Aorta (tissue), 5 donors: ENCODE measurements at regions of chr5 and their contacts with region 1.

Region 1: DNA sequence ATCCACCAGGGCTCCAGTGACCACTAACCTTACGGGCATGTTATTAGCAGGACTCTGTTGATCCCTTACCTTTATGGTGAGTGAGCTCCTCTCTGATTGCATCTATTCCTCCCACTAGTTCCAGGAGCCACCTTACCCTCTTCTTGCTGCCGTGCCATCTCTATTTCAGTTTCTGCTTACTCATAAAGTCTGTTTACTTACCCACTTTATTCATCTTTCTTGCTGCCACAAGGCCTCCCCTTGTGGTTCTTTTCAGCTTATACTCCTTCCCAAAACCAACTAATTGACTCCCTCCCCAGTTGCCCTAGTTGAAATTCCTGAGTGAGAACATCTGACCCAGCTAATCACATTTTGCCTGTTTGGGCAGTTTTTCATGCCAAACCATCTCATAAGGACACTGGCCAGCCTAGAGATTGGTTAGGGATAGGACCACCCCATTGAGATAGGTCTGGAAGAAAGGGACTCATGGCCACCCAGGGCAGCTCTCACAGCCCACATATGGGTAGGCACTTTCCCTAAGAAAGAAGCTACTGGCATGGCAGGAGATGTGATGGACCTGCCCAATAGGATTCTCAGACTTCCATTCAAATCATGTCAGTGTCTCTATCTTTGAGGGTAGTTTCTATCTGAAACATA is 412.7 kb downstream of the EFNA5 start:
- DNase-seq: no peak
- ATAC-seq: no peak
- H3K4me3 ChIP-seq: no peak overlapping the region
- H3K27ac ChIP-seq: no peak overlapping the region
- H3K4me1 ChIP-seq: peaks cover 0 to 7% of the 10 kb centered on the region in 2 donors
- H3K27me3 ChIP-seq: no peaks in the 10 kb centered on the region

Region 2: DNA sequence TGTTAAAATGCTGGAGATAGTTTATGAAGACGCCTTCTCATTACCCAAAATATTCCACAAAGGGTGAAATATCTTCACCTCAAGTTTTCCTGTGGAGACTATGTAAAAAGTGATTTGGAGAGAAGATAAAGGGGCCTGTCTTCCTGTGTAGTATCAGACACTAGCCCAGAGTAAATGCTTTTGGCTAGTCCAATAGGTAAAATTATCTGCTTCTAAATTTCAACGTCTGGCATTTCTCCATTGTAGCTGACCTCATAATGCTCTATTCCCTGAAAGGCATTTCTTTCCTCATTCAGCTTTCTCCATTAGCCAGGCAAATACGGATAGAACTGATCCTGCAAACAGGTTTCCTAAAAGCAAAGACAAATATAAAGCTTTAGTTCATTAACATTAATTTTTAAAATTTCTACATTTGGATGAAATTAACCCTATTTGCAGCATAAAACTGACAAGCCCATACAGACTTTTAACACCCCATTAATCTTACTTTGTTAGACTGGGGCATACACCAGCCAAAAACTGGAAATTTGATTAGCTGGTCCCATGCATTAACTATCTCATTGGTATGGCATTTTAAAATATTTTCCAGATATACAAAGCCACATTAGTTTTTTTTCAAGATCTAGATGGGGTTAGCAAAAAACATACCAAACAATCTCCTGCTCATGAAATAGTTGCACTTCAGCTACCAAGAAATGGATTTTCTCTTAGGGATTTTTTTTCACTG is 136.0 kb before region 1 on chr5:
- intact Hi-C with region 1: no loop called
- DNase-seq: no peak
- ATAC-seq: no peak
- H3K4me3 ChIP-seq: no peak overlapping the region
- H3K27ac ChIP-seq: no peak overlapping the region
- H3K4me1 ChIP-seq: no peaks in the 10 kb centered on the region
- H3K27me3 ChIP-seq: no peaks in the 10 kb centered on the region

Region 3: GRCh38 chr5:107564896-107565512 is 307.0 kb after region 1 on chr5:
- intact Hi-C with region 1: loop called (anchors 10 kb)
- DNase-seq: no peak
- ATAC-seq: no peak
- H3K4me3 ChIP-seq: peak overlapping the region in 1 of 2 donors; percentile 48
- H3K27ac ChIP-seq: no peak overlapping the region
- H3K4me1 ChIP-seq: peaks cover 0 to 2% of the 10 kb centered on the region in 2 donors
- H3K27me3 ChIP-seq: no peaks in the 10 kb centered on the region

Region 4: DNA sequence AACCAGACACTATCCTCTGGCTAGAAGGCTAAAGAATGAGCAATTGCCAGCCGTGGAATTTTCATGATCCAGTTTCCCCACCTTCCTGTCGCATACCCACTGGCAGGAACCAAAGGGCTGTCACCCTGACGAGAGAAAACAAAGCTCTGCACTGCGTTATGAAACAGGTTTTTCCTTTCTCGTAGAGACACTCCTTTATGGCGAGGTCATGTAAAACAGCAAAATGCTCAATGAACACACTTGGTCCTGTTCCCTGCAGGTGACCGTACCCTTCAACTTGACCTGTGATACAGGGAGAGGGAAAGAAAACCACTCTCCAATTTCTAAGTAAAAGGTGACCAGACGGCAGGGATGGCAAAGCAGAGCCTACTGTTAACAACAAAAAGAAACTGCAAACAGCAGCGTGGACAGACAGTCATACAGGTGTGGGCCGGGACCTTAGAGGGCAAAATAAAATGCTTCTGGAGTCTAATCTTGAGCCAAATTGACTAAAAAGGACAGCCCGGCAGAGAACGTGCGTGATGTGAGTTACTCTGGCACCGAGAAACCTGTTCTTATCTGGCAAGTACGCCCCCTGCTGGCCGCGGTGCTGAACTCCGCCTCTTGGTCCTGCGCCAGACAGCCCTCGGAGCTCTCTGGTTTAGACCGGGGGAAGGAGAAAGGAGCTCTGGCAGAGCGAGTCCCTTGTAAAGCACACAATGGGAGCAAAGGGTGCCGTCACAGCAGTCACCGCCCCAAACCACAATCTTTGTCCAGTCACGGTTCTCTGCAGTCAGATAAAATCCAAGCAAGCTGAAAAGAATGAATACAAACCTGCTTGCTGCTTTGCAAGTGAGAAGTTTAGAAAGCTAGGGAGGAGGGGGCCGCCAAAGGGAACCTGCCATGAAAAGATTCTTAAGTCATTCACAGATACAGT is 313.9 kb after region 1 on chr5:
- intact Hi-C with region 1: loop called (anchors 10 kb)
- DNase-seq: peak; percentile 93 to 98
- ATAC-seq: peak; percentile 95
- H3K4me3 ChIP-seq: peak overlapping the region; percentile 42 to 73
- H3K27ac ChIP-seq: peak overlapping the region in 1 of 2 donors; percentile 31
- H3K4me1 ChIP-seq: peaks cover 0 to 7% of the 10 kb centered on the region in 2 donors
- H3K27me3 ChIP-seq: no peaks in the 10 kb centered on the region

Region 5: GRCh38 chr5:107673368-107674136 is 415.5 kb after region 1 on chr5:
- intact Hi-C with region 1: loop called in 1 of 2 experiments (anchors 5 kb)
- DNase-seq: peak; percentile 89 to 97
- ATAC-seq: peak; percentile 87
- H3K4me3 ChIP-seq: peak overlapping the region; percentile 1 to 63
- H3K27ac ChIP-seq: peak overlapping the region in 1 of 2 donors; percentile 62
- H3K4me1 ChIP-seq: no peaks in the 10 kb centered on the region
- H3K27me3 ChIP-seq: no peaks in the 10 kb centered on the region